ENCODE measurements at regions of chr11 and their contacts with region 1.

Region 1: GRCh38 chr11:77820563-77821348 is at the starts of genes AAMDC and RSF1:
- DNase-seq: peak; percentile 99
- ATAC-seq: peak; percentile 92
- total RNA-seq, gene AAMDC: 127 TPM
- total RNA-seq, gene RSF1: 37.7 TPM

Region 2: DNA sequence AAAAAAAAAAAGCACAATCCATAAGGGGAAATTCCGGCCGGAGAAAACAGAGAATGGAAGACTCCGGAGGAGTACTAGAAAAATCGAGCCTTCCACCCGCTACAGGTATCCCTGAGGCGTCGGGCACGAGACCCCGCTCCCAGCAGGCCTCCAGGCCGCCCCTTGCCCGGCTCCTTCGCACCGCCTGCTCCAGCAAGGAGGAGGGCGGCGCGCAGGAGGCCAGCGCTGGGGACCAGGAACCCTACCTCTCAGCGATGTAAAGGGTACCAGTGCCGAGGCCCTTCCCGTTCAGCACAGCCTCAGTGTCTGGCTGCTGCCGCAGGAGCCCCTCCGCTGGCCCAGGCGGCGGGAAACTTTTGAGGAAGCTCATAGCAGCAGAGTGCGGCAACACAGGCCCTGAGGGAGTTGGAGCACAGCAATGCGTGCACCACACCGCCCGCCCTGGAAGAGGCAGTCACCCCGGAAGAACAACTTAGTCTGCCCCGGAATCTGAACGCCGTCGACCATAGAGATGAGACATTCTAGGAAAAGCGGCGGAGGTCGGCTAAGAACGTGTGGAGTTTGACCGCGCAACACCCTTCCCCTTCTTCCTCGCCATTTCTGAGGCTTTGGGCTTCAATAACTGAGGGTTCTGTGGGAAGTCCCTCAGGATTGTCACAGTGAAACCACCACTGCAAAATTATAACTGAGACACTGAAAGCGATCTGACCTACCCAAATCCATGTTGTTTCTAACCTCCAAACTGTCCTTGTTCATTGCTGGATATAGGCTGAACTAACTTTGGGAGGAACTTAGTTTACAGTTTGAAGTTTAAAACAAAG is 183.2 kb before region 1 on chr11 and contains the start of gene CLNS1A:
- intact Hi-C with region 1: loop called (anchors 10 kb)
- DNase-seq: peak; percentile 90
- ATAC-seq: peak; percentile 98
- total RNA-seq, gene CLNS1A: 71.5 TPM

Measured in Right ventricle myocardium superior (tissue), 1 donor.